PC-9 (cell line): ENCODE measurements at regions of chr1 and their contacts with region 1.

Region 1: DNA sequence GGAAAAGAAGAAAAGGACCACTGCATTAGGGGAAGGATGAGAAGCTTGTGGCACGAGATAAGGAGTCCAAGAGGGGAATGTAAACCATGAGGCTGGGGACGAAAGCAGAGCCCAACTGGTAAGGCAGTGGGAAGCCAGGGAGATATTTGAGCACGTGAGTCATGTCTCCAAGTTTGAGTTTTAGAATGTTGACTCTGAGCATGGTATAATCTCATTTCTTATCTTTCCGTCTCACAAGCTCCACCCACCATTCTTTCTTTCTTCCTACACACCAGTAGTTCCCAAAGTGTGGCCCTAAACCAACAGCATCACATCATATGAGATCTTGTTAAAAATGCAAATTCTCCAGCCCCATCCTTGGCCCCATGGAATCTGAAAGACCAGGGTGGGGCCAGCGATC is 145.3 kb downstream of the PLPP3 start:
- DNase-seq: no peak
- H3K4me3 ChIP-seq: no peak overlapping the region
- H3K27ac ChIP-seq: no peak overlapping the region
- H3K4me1 ChIP-seq: peaks cover 9% of the 10 kb centered on the region; the same call in 1 of the 2 replicates
- H3K27me3 ChIP-seq: no peaks in the 10 kb centered on the region
- CTCF ChIP-seq: no peak

Region 2: GRCh38 chr1:56098946-56099345 is 335.1 kb before region 1 on chr1:
- CTCF ChIA-PET with region 1: no interaction called
- POLR2A ChIA-PET with region 1: no interaction called
- intact Hi-C with region 1: no loop called
- DNase-seq: no peak
- H3K4me3 ChIP-seq: no peak overlapping the region
- H3K27ac ChIP-seq: no peak overlapping the region
- H3K4me1 ChIP-seq: no peaks in the 10 kb centered on the region
- H3K27me3 ChIP-seq: no peaks in the 10 kb centered on the region
- CTCF ChIP-seq: no peak

Region 3: GRCh38 chr1:56477164-56478111 is 43.4 kb after region 1 on chr1:
- CTCF ChIA-PET with region 1: no interaction called
- POLR2A ChIA-PET with region 1: interaction called, 13 read pairs
- intact Hi-C with region 1: no loop called
- DNase-seq: no peak
- H3K4me3 ChIP-seq: no peak overlapping the region
- H3K27ac ChIP-seq: no peak overlapping the region
- H3K4me1 ChIP-seq: peaks cover 7% of the 10 kb centered on the region; the same call in 1 of the 2 replicates
- H3K27me3 ChIP-seq: no peaks in the 10 kb centered on the region
- CTCF ChIP-seq: no peak